ENCODE measurements at regions of chr12 and their contacts with region 1.

Region 1: DNA sequence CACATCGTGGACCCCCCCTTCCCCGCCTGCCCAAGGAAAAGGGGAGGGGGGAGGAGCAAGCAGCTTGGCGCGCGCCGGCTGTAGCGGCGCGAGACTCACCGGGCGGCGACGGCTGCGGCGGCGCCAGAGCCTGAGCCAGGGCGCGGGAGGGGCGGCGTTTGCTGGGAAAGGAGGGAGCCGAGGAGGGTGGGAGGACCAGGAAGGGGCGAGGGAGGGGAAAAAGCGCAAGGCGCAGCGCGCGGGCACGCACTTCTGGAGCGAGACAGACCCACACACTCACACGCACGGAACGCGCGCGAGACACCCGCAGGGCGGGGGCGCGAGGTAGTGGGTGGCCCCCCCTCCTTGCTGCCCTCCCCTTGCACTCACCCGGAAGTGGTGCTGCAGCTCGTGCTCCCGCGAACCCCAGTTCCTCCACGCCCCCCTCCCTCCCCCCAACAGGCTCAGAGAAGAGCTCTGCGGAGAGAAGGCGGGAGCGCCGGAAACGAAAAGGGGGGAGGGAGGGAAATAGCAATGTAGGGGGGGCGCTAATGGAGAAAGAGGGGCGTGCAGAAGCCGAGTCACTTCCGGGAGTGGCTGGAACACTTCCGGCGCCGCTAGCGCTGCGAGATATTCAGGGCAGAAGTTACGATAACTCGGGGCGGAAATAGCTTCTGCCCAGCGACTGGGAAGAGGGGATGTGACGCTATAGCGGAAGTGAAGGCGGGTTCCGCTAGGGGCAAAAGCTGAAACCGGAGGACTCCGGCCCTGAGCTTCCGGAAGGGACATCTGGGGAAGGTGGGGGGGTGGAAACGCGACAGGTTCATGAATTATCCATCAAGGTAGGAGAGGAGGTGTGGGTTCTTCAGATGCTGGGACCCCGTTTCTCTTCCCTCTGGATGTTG is at the start of gene ZNF384:
- DNase-seq: peak; percentile 99
- total RNA-seq, gene ZNF384: 32.7 TPM

Region 2: GRCh38 chr12:6662906-6663742 is 26.1 kb before region 1 on chr12 and contains the start of gene ING4:
- intact Hi-C with region 1: loop called (anchors 1 kb)
- DNase-seq: peak; percentile 99
- total RNA-seq, gene ING4: 20.6 TPM

Region 3: DNA sequence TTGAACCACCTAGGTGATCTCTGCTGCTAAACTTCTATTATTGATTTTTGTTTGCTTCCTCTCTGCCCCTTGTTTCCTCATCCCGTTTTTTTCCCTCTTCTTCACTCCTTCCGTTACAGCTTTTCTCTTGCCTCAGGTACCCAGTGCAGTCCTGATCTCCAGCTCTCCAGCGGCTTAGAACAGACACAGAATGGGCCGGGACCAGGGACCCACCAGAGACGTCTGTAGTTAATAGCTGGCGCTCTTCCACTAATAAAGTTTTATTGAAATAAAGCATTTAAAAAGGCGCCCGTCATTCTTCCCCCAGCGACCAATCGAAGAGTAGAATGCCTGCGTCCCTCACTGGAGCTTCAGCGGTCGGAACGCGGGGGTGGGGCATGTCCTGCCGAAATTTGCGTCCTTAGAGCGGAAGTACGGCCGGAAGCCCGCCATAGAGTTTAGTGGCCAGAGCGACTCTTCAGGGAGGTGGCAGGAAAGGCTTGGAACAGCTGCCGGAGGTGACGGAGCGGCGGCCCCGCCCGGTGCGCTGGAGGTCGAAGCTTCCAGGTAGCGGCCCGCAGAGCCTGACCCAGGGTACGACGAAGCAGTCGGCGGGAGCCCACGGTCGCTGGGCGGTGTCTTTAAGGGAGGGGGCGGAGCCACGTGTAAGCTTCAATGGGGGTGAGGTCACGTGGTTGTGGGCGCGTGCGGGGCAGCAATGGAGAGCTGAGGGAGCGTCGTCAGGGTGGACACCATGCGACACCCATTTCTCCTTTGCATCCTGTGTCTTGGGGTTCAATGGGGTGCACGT is 34.6 kb after region 1 on chr12 and contains the start of gene COPS7A:
- intact Hi-C with region 1: loop called (anchors 1 kb)
- DNase-seq: peak; percentile 99
- total RNA-seq, gene COPS7A: 64.7 TPM